ENCODE measurements at regions of chr2 and their contacts with region 1.

Region 1: GRCh38 chr2:84302513-84303412 is 156.3 kb downstream of the SUCLG1 start:
- DNase-seq: peak in 5 of 9 experiments; percentile 14 to 55 (median 46)
- ATAC-seq: no peak
- H3K4me3 ChIP-seq: no peak overlapping the region
- H3K4me3 Mint-ChIP-seq: no peak overlapping the region
- H3K27ac ChIP-seq: no peak overlapping the region
- H3K27ac Mint-ChIP-seq: no peak overlapping the region
- H3K4me1 ChIP-seq: no peaks in the 10 kb centered on the region
- H3K4me1 Mint-ChIP-seq: no peaks in the 10 kb centered on the region
- H3K27me3 ChIP-seq: no peaks in the 10 kb centered on the region
- H3K27me3 Mint-ChIP-seq: peaks cover 15% of the 10 kb centered on the region
- CTCF ChIP-seq: peak; percentile 66

Region 2: GRCh38 chr2:84314901-84315330 is 12.2 kb after region 1 on chr2:
- CTCF ChIA-PET with region 1: interaction called, 15 read pairs
- POLR2A ChIA-PET with region 1: no interaction called
- intact Hi-C with region 1: no loop called
- DNase-seq: peak; percentile 50 to 76 (median 71)
- ATAC-seq: peak; percentile 65
- H3K4me3 ChIP-seq: no peak overlapping the region
- H3K4me3 Mint-ChIP-seq: no peak overlapping the region
- H3K27ac ChIP-seq: no peak overlapping the region
- H3K27ac Mint-ChIP-seq: no peak overlapping the region
- H3K4me1 ChIP-seq: no peaks in the 10 kb centered on the region
- H3K4me1 Mint-ChIP-seq: peaks cover 3% of the 10 kb centered on the region
- H3K27me3 ChIP-seq: no peaks in the 10 kb centered on the region
- H3K27me3 Mint-ChIP-seq: peaks cover 15% of the 10 kb centered on the region
- CTCF ChIP-seq: peak; percentile 72

Measured in CD8-positive, alpha-beta T cell (primary cell).